Activated T-helper 1 cell treated with anti-CD3 and anti-CD28 coated beads, Interleukin-12 subunit alpha, Interleukin-12 subunit beta, Interleukin-2, Interleukin-4 antibody, amounts not matched to agents 30 ng/mL and 10 ng/mL and 1 ng/mL, durations not matched to agents 14 hours and 24 hours and 36 hours (primary cell): ENCODE measurements at regions of chr3 and their contacts with region 1.

Region 1: GRCh38 chr3:151838583-151839312 is 24.8 kb downstream of the AADAC start:
- DNase-seq: no peak
- H3K4me3 Mint-ChIP-seq: no peak overlapping the region
- H3K27ac Mint-ChIP-seq: no peak overlapping the region
- H3K4me1 Mint-ChIP-seq: peaks cover 6% of the 10 kb centered on the region
- H3K27me3 Mint-ChIP-seq: peaks cover 23% of the 10 kb centered on the region

Region 2: GRCh38 chr3:151156618-151157216 is 682.0 kb before region 1 on chr3:
- intact Hi-C with region 1: loop called (anchors 1 kb)
- DNase-seq: no peak
- H3K4me3 Mint-ChIP-seq: no peak overlapping the region
- H3K27ac Mint-ChIP-seq: no peak overlapping the region
- H3K4me1 Mint-ChIP-seq: no peaks in the 10 kb centered on the region
- H3K27me3 Mint-ChIP-seq: peaks cover 9% of the 10 kb centered on the region

Region 3: DNA sequence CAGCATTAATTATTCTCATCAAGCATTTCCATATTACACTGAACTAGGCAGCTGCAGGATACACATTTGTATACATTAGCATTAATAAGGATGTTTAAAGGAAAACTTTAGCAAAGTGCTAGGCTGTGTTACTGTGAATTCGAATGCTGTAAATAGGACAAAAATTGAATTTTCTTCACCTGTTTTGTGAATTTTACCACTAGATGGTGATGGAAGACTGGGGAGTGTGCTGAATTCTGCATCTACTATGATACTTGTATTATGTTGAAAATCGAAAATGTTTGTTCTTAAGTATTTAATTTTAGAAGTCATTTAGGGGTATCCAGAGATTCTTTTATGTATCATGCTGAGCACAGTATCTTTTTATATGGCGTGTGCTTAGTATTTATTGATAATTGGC is 548.1 kb before region 1 on chr3:
- intact Hi-C with region 1: loop called (anchors 1 kb)
- DNase-seq: no peak
- H3K4me3 Mint-ChIP-seq: no peak overlapping the region
- H3K27ac Mint-ChIP-seq: no peak overlapping the region
- H3K4me1 Mint-ChIP-seq: peaks cover 3% of the 10 kb centered on the region
- H3K27me3 Mint-ChIP-seq: peaks cover 14% of the 10 kb centered on the region

Region 4: DNA sequence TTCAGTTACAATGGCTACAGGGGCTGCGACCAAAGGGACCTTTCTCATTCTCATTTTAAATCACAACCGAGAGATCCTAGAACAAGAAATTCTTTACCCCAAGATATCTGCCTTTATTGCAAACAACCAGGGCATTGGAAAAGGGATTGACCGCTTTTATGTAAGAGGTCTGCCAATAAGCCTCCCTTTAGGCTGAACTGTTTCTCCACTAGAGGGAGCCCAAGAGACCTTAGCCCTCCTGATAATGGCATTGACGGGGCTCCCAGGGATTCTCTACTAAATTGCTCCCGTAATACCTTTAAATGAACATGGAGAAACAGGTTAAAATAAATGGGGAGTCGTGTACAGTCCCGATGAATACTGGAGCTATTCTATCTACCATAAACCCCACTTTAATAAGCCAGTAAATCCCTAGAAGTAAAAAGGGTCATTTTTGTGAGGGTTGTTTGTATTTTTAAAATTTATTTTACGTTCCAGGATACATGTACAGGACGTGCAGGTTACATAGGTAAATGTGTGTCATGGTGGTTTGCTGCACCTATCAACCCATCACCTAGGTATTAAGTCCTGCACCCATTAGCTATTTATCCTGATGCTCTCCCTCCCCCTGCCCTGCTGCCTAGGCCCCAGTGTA is 370.3 kb before region 1 on chr3:
- intact Hi-C with region 1: loop called (anchors 1 kb)
- DNase-seq: peak; percentile 6
- H3K4me3 Mint-ChIP-seq: no peak overlapping the region
- H3K27ac Mint-ChIP-seq: no peak overlapping the region
- H3K4me1 Mint-ChIP-seq: no peaks in the 10 kb centered on the region
- H3K27me3 Mint-ChIP-seq: peaks cover 9% of the 10 kb centered on the region

Region 5: GRCh38 chr3:151611419-151611818 is 227.3 kb before region 1 on chr3:
- intact Hi-C with region 1: no loop called
- DNase-seq: no peak
- H3K4me3 Mint-ChIP-seq: no peak overlapping the region
- H3K27ac Mint-ChIP-seq: no peak overlapping the region
- H3K4me1 Mint-ChIP-seq: no peaks in the 10 kb centered on the region
- H3K27me3 Mint-ChIP-seq: no peaks in the 10 kb centered on the region

Region 6: GRCh38 chr3:151787626-151788025 is 51.1 kb before region 1 on chr3:
- intact Hi-C with region 1: no loop called
- DNase-seq: no peak
- H3K4me3 Mint-ChIP-seq: no peak overlapping the region
- H3K27ac Mint-ChIP-seq: no peak overlapping the region
- H3K4me1 Mint-ChIP-seq: no peaks in the 10 kb centered on the region
- H3K27me3 Mint-ChIP-seq: no peaks in the 10 kb centered on the region

Region 7: GRCh38 chr3:151827816-151828215 is 10.9 kb before region 1 on chr3:
- intact Hi-C with region 1: no loop called
- DNase-seq: no peak
- H3K4me3 Mint-ChIP-seq: no peak overlapping the region
- H3K27ac Mint-ChIP-seq: no peak overlapping the region
- H3K4me1 Mint-ChIP-seq: no peaks in the 10 kb centered on the region
- H3K27me3 Mint-ChIP-seq: peaks cover 24% of the 10 kb centered on the region